HepG2 (cell line): ENCODE measurements at regions of chr14 and their contacts with region 1.

Region 1: GRCh38 chr14:31229638-31230229 is 22.1 kb upstream of the HECTD1 start:
- DNase-seq: peak; percentile 100
- ATAC-seq: peak; percentile 99
- H3K4me3 ChIP-seq: peak overlapping the region; percentile 0 to 14 (median 1); a peak in 1 of 6 replicates
- H3K27ac ChIP-seq: peak overlapping the region; percentile 72
- H3K4me1 ChIP-seq: peaks cover 62% of the 10 kb centered on the region
- H3K27me3 ChIP-seq: no peaks in the 10 kb centered on the region
- CTCF ChIP-seq: peak; percentile 53
- EP300 ChIP-seq: peak; percentile 100
- POLR2A ChIP-seq: peak; percentile 38 to 66; a peak in 3 of 4 replicates
- RAD21 ChIP-seq: peak; percentile 90

Region 2: GRCh38 chr14:31251028-31251958 is 21.6 kb after region 1 on chr14:
- CTCF ChIA-PET with region 1: no interaction called
- POLR2A ChIA-PET with region 1: interaction called, 121 read pairs
- in situ Hi-C with region 1: no loop called
- intact Hi-C with region 1: no loop called
- DNase-seq: no peak
- ATAC-seq: peak; percentile 69
- H3K4me3 ChIP-seq: no peak overlapping the region
- H3K27ac ChIP-seq: no peak overlapping the region
- H3K4me1 ChIP-seq: peaks cover 53% of the 10 kb centered on the region
- H3K27me3 ChIP-seq: no peaks in the 10 kb centered on the region
- CTCF ChIP-seq: no peak
- EP300 ChIP-seq: no peak
- POLR2A ChIP-seq: no peak
- RAD21 ChIP-seq: no peak

Region 3: DNA sequence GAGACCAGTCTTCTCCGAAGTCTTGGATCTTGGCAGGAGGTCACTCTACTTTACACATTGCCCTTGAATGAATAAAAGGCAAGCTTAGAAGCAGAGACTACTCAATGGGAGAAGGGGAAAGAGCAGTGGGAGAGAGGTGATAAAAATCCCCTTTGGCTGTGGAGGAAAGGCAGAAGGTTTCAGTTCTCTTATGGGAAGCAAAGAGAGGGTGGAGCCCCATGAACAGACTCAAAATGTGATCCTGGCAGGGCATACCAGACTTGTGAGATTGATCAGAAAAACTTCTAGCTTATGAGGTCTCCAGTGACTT is 27.5 kb after region 1 on chr14:
- CTCF ChIA-PET with region 1: interaction called, 3 read pairs
- POLR2A ChIA-PET with region 1: interaction called, 121 read pairs
- in situ Hi-C with region 1: no loop called
- intact Hi-C with region 1: loop called (anchors 1 kb)
- DNase-seq: no peak
- ATAC-seq: no peak
- H3K4me3 ChIP-seq: no peak overlapping the region
- H3K27ac ChIP-seq: peak overlapping the region; percentile 89
- H3K4me1 ChIP-seq: peaks cover 96% of the 10 kb centered on the region
- H3K27me3 ChIP-seq: no peaks in the 10 kb centered on the region; a peak in 1 of 5 replicates
- CTCF ChIP-seq: no peak
- EP300 ChIP-seq: no peak
- POLR2A ChIP-seq: no peak
- RAD21 ChIP-seq: no peak

Region 4: DNA sequence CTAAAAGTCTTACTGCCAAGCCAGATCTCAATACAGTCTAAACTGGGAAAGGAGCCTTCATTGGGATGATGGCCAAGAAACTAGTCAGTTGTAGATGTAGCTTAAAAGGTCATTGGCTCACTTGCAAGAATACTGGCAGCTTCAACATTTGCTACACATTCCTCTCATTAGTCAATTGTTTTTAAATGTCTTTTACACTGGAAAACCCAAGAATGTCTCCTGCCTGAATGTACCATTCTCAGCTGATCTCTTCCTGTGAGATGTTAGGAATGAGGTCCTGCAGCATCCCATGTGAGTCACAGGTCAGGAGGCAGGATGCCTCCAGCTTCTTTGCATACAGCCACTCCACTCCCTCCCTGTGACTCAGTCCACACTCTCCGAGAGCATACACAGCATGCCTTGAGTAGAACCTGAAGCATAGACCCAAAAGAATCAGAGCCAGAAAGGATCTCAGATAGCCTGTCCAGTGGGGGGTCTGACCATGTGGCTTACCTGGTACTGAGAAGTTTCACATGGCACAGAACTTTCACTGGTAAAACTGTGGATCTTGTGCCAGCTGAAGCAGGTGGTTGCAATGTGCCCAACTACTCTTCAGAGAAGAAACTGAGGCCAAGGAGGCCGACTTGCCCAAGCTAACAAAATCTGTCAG is 33.9 kb after region 1 on chr14:
- CTCF ChIA-PET with region 1: interaction called, 3 read pairs
- POLR2A ChIA-PET with region 1: interaction called, 121 read pairs
- in situ Hi-C with region 1: no loop called
- intact Hi-C with region 1: loop called (anchors 1 kb)
- DNase-seq: peak; percentile 91
- ATAC-seq: peak; percentile 73
- H3K4me3 ChIP-seq: no peak overlapping the region; a peak in 1 of 6 replicates
- H3K27ac ChIP-seq: peak overlapping the region; percentile 89
- H3K4me1 ChIP-seq: peaks cover 86% of the 10 kb centered on the region
- H3K27me3 ChIP-seq: no peaks in the 10 kb centered on the region; a peak in 1 of 5 replicates
- CTCF ChIP-seq: no peak
- EP300 ChIP-seq: peak in 1 of 2 experiments; percentile 54; a peak in 2 of 4 replicates
- POLR2A ChIP-seq: no peak
- RAD21 ChIP-seq: peak; percentile 28; the same call in 1 of the 2 replicates